Calu3 (cell line): ENCODE measurements at regions of chr16 and their contacts with region 1.

Region 1: GRCh38 chr16:71230122-71230845 is at the start of gene HYDIN:
- DNase-seq: peak; percentile 94
- H3K4me3 Mint-ChIP-seq: peak within 1 kb of the TSS; percentile 91
- H3K27ac Mint-ChIP-seq: peak within 1 kb of the TSS; percentile 94
- H3K4me1 Mint-ChIP-seq: peaks cover 13% of the 10 kb centered on the region
- H3K27me3 Mint-ChIP-seq: peaks cover 11% of the 10 kb centered on the region
- CTCF ChIP-seq: no peak
- total RNA-seq, gene HYDIN: 2.9 and 3.8 TPM in 2 replicates

Region 2: DNA sequence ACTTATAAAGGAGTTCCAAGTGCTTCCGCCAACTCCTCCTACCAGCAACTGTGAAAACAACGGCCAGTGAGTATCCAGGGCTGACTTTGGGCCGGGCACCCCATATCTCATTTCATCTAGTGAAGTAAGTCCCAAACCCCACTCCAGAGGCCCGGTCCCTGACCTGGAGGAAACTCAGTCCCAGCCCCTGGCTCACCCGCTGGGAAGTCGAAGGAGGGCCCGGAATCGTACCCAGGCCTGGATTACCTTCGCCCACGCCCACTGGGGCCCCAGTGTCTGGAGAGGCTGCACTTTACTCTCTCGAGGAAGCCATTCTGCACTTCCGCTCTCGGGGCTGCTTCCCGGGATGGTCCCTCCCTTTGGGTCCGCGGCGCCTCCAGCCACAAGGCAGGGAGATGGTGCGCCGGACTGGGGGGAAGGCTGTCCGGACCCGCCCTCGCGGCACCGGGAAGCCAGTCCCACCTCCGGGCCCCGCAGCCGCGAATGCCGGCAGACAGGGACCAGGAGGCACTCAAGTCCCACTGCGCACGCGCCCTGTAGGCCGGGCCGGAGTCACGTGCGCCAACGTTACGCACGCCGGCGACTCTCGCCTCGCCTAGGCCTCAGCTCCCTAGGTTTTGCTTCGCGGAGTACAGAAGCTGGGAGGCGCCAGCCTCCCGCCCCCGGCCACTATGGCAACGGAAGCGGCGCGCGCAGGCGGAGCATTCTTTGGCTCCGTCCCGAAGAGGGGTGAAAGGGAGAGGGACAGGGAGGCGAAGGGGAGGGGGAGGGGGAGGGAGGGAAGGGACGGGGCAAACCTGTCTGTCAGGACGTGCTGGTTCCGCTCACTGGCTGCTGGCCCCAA is 58.8 kb after region 1 on chr16 and contains the start of gene CMTR2:
- CTCF ChIA-PET with region 1: no interaction called
- intact Hi-C with region 1: loop called (anchors 5 kb)
- DNase-seq: peak; percentile 97
- H3K4me3 Mint-ChIP-seq: peak within 1 kb of the TSS; percentile 66
- H3K27ac Mint-ChIP-seq: peak within 1 kb of the TSS; percentile 50
- H3K4me1 Mint-ChIP-seq: peaks cover 23% of the 10 kb centered on the region
- H3K27me3 Mint-ChIP-seq: no peaks in the 10 kb centered on the region
- CTCF ChIP-seq: no peak
- total RNA-seq, gene CMTR2: 44.4 and 45.0 TPM in 2 replicates